ENCODE measurements at regions of chr10 and their contacts with region 1.

Region 1: GRCh38 chr10:22003079-22003913 is at the start of gene DNAJC1:
- DNase-seq: peak; percentile 99
- H3K4me3 Mint-ChIP-seq: peak within 1 kb of the TSS; percentile 94
- H3K27ac Mint-ChIP-seq: peak within 1 kb of the TSS; percentile 84
- H3K4me1 Mint-ChIP-seq: peaks cover 34% of the 10 kb centered on the region
- H3K27me3 Mint-ChIP-seq: peaks cover 5% of the 10 kb centered on the region
- total RNA-seq, gene DNAJC1: 18.0 to 18.8 TPM

Region 2: GRCh38 chr10:21533467-21534279 is 469.6 kb before region 1 on chr10 and contains the start of gene MLLT10:
- CTCF ChIA-PET with region 1: no interaction called
- intact Hi-C with region 1: loop called (anchors 2 kb)
- DNase-seq: peak; percentile 91
- H3K4me3 Mint-ChIP-seq: peak within 1 kb of the TSS; percentile 85
- H3K27ac Mint-ChIP-seq: peak within 1 kb of the TSS; percentile 91
- H3K4me1 Mint-ChIP-seq: peaks cover 23% of the 10 kb centered on the region
- H3K27me3 Mint-ChIP-seq: no peaks in the 10 kb centered on the region
- total RNA-seq, gene MLLT10: 23.0 to 23.7 TPM

Region 3: DNA sequence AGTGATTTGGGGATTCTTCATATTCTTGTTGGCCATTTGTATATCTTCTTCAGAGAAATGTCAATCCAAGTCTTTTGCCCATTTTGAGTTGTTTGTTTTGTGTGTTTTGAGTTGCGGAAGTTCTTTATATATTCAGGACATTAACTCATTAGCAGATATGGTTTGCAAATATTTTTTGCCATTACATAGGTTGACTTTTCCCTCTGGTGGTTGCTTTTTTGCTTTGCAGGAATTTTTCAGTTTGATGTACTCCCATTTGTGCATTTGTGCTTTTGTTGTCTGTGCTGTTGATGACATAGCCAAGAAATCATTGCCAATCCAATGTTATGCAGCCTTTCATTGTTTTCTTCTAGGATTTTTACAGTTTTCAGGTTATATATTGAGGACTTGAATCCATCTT is 63.8 kb after region 1 on chr10:
- CTCF ChIA-PET with region 1: no interaction called
- intact Hi-C with region 1: no loop called
- DNase-seq: no peak
- H3K4me3 Mint-ChIP-seq: no peak overlapping the region
- H3K27ac Mint-ChIP-seq: no peak overlapping the region
- H3K4me1 Mint-ChIP-seq: no peaks in the 10 kb centered on the region
- H3K27me3 Mint-ChIP-seq: peaks cover 2% of the 10 kb centered on the region

Region 4: DNA sequence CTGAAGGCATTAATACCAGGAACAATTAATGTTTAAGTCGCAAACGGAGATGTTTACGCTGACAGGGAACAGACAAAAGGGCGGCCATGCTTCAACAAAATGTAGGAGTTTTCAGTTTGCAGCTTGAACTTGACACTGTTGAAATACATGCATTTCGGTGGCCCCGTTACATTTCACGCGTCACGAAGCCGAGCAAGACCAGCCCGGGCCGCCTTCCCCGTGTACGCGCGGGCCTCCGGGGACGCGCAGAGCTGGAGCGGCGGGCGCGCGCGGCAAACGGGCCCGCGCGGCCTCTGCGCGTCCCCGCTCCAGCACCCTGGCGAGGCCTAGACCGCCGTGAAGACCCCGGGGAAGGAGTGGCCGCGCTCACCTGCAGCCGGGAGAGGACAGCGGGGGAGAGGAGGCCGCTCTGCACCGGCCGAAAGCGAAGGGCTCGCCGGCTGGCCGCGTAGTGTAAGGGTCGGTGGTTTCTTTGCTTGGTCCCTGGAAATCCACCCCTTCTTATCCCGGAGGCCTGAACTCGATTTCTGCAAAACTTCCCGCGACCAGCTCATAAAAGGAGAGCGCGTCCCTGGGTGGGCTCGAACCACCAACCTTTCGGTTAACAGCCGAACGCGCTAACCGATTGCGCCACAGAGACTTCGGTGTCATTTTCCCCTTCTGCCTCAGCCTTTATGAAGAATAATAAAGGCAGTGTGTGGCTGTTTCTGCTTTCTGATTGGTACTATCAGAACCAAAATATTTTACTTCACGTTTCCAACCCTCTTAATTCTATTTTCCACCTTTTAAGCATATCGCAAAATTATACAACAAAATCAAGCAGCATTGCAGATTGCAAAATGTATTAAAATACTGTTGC is 225.9 kb after region 1 on chr10:
- CTCF ChIA-PET with region 1: no interaction called
- intact Hi-C with region 1: loop called (anchors 1 kb)
- DNase-seq: peak; percentile 89
- H3K4me3 Mint-ChIP-seq: peak overlapping the region; percentile 82
- H3K27ac Mint-ChIP-seq: peak overlapping the region; percentile 96
- H3K4me1 Mint-ChIP-seq: peaks cover 17% of the 10 kb centered on the region
- H3K27me3 Mint-ChIP-seq: peaks cover 5% of the 10 kb centered on the region

Region 5: GRCh38 chr10:22308390-22308789 is 305.1 kb after region 1 on chr10:
- CTCF ChIA-PET with region 1: no interaction called
- intact Hi-C with region 1: no loop called
- DNase-seq: peak; percentile 70
- H3K4me3 Mint-ChIP-seq: no peak overlapping the region
- H3K27ac Mint-ChIP-seq: no peak overlapping the region
- H3K4me1 Mint-ChIP-seq: peaks cover 2% of the 10 kb centered on the region
- H3K27me3 Mint-ChIP-seq: peaks cover 2% of the 10 kb centered on the region

Region 6: DNA sequence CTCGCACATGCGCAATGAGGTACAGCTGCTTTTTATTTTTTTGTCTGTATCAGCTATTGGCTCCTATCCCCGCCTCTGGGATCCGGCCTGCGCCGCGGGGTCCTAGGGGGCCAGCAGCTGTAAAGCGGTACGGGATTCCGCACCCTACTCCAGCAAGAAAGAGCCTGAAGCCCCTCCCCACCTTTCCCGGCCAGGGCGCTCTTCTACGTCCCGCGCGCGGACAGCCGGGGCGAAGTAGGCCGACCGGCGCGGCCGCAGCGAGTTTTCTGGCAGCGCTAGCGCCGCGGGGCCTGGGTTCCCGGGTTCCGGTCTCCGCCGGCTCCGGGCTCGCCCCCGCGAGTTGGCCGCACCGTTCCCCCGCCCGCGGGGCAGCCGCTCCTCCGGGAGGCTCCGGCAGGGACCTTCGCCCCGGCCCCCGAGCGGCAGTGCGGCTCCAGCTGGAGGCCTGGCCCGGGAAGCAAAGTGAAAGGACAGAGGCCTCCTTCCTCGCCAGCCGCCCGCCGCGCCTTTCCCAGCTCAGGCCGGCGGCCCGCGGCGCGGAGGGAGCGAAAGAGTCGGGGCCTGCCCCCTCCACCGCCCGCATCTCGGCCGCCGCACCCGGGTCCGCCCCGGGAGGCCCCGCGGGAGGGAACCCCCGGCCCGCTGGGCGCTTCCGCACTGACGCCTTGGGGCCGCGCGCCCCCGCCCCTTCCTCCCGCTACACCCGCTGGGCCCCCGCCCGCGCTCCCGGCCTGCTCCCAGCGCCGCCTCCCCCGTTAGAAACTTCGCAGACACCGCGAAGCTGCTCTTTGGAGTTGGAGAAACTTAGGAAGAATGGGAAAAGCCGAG is 337.3 kb after region 1 on chr10:
- CTCF ChIA-PET with region 1: no interaction called
- intact Hi-C with region 1: loop called (anchors 1 kb)
- DNase-seq: peak; percentile 63
- H3K4me3 Mint-ChIP-seq: peak overlapping the region; percentile 88
- H3K27ac Mint-ChIP-seq: peak overlapping the region; percentile 74
- H3K4me1 Mint-ChIP-seq: peaks cover 19% of the 10 kb centered on the region
- H3K27me3 Mint-ChIP-seq: peaks cover 69% of the 10 kb centered on the region

Region 7: GRCh38 chr10:22573820-22574569 is 570.7 kb after region 1 on chr10:
- CTCF ChIA-PET with region 1: no interaction called
- intact Hi-C with region 1: loop called (anchors 5 kb)
- DNase-seq: peak; percentile 44
- H3K4me3 Mint-ChIP-seq: no peak overlapping the region
- H3K27ac Mint-ChIP-seq: peak overlapping the region; percentile 1
- H3K4me1 Mint-ChIP-seq: peaks cover 37% of the 10 kb centered on the region
- H3K27me3 Mint-ChIP-seq: no peaks in the 10 kb centered on the region

Region 8: DNA sequence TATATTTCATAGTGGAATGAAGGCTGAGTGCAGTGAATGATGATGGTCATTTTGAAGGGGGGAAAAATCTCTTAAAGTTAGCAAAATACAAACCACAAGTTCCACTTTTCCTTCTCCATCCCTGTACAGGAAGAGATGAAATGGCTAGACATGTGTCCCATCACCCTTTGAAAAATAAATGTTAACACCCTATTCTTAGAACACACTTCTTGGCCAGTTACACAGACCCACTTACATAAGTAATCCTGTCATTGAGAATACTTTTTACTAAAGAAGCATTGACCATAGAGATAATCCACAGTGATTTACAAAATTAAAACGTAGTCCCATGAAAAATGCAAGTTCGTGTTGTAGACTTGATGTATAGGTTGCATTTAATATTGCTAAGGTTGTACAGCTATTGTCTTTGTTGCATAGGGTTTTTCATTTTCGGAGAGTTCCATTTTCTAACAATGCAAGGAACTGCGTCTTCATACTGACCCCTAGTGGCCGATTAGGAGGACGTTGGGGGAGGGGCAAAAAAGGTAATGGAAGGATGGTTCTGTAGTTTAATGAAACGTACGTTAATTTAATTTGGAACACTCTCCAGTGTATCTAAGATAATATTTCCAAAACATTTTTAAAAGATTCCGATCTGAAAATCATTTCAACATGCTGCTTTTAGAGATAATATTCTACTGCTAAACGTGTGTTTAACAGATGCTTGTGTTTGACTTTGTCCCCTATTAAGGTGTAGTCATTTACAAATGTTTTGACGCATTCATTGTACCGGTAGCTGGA is 985.5 kb after region 1 on chr10:
- CTCF ChIA-PET with region 1: interaction called, 3 read pairs
- intact Hi-C with region 1: loop called (anchors 2 kb)
- DNase-seq: peak; percentile 82
- H3K4me3 Mint-ChIP-seq: no peak overlapping the region
- H3K27ac Mint-ChIP-seq: no peak overlapping the region
- H3K4me1 Mint-ChIP-seq: peaks cover 11% of the 10 kb centered on the region
- H3K27me3 Mint-ChIP-seq: no peaks in the 10 kb centered on the region

Region 9: GRCh38 chr10:23438550-23439441 is 1435.5 kb after region 1 on chr10 and contains the start of gene OTUD1:
- CTCF ChIA-PET with region 1: no interaction called
- intact Hi-C with region 1: loop called (anchors 5 kb)
- DNase-seq: peak; percentile 94
- H3K4me3 Mint-ChIP-seq: peak within 1 kb of the TSS; percentile 94
- H3K27ac Mint-ChIP-seq: peak within 1 kb of the TSS; percentile 84
- H3K4me1 Mint-ChIP-seq: peaks cover 33% of the 10 kb centered on the region
- H3K27me3 Mint-ChIP-seq: no peaks in the 10 kb centered on the region
- total RNA-seq, gene OTUD1: 15.7 to 16.0 TPM

Measured in activated naive CD4-positive, alpha-beta T cell treated with anti-CD3 and anti-CD28 coated beads for 36 hours (primary cell).